ENCODE measurements at regions of chr4 and their contacts with region 1.

Region 1: DNA sequence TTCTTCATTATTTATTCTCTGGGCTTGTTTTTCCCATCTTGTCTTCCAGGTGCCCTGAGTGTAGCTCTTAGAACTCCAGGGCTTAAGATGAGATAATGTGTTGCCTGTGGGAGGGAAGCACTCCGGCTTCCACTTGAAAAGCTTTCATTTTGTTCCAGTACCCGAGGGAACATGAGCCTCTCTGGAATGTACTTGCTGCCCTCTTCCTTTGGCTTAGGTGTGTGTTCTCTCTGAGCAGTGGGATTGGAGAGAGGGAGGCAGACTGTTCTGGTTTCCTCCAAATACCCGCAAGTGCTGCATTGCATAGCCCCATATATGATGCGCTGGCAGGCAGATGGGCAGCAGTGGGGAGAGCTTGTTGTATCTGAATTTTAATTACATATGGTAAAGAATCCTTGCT is 861 bp upstream of the DTHD1 start:
- DNase-seq: no peak
- CTCF ChIP-seq: no peak

Region 2: GRCh38 chr4:35884714-35885480 is 395.7 kb before region 1 on chr4:
- CTCF ChIA-PET with region 1: no interaction called
- POLR2A ChIA-PET with region 1: no interaction called
- DNase-seq: no peak
- CTCF ChIP-seq: no peak

Region 3: GRCh38 chr4:36269101-36269500 is 11.5 kb before region 1 on chr4:
- CTCF ChIA-PET with region 1: interaction called, 13 read pairs
- POLR2A ChIA-PET with region 1: no interaction called
- DNase-seq: no peak
- CTCF ChIP-seq: no peak